ENCODE measurements at regions of chr9 and their contacts with region 1.

Region 1: DNA sequence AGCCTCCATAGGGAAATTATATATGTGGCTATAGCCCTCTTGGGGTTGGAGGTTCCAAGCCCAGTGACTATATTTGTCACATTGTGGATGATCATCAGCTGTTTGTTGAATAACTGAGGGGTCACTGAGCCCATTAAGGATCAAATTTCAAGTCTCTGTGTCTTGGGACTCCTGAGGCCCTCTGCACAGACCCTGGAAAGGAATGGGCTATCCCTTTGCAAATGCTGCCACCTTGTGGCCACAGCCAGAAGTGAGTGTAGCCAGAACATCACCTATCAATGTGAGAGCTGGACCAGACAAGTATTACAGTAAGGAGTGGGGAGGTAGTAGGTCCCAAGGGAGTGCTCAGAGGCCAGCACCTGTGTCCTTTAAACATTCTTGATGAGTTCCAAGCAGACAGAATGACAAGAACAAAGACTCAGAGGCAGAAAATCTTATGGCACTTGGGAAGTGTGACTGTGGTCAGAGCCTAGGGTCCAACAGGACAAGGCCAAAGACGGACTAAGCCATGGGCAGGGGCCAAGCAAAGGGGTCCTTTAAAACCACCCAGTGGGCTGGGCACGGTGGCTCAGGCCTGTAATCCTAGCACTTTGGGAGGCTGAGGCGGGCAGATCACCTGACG is 8.2 kb downstream of the RPP25L start:
- DNase-seq: peak; percentile 83
- CTCF ChIP-seq: peak; percentile 91

Region 2: DNA sequence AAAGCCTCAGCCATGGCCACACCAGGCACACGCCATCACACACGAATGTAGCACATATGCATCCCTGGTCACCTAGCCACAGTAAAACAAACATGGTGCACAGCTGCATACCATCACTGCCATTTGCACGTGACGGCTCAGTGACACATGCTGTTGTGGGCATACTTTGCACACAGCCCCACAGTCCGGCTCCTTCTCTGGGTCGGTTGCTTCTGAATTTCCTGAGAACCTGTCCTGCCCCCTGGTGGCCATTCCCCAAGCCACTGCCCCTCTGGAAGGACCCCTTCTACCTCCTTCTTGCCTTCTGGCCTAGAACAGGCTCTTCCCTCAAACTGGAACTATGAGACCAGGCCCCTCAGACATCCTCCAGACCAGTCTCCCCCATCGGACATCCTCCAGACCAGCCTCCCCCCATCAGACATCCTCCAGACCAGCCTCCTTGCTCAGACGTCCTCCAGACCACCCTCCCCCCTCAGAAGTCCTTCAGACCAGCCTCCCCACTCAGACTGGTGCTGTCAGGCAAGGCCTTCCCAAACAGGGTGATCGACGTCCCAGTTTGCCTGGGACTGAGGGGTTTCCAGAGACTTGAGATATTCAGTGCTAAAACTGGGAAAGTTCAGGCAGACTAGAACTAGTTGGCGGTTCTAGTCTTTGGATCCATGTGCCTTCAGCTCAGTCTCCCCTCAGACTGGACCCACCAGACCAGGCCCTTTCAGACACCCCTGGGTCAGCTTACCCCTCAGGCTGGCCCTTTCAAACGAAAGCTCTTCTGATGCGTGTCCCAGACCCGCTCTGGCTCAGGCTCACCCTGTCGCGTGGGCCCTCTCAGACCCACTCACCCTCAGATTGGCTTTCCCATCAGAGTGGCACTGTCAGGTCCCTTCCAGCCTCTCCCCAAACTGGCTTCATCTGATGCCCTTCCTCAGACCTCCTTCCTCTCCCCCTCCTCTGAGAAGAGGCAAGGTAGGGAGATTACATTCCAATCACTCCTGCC is 56.6 kb before region 1 on chr9:
- CTCF ChIA-PET with region 1: interaction called, 14 read pairs
- POLR2A ChIA-PET with region 1: interaction called, 3 read pairs
- DNase-seq: peak; percentile 58
- CTCF ChIP-seq: peak; percentile 52

Region 3: DNA sequence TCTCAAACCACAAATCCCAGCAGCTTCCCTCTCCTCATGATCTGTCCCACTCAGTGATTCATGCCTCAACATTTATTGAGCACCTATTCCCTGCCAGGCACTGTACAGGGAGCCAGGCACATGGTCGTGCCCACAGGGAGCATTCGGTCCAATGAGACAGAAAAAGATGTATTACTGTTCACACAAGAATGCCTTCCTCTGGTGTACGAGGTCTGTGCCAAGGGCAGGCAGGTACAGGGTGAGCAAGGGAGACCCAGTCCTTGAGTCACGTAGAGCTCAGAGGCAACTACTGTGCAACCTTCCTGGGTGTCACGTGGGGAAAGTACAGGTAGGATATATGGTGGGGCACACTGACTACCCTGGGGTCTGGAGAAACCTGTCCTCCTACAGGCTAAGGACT is 18.8 kb before region 1 on chr9:
- CTCF ChIA-PET with region 1: interaction called, 15 read pairs
- POLR2A ChIA-PET with region 1: no interaction called
- DNase-seq: no peak
- CTCF ChIP-seq: no peak

Region 4: GRCh38 chr9:34620061-34620994 is 16.6 kb after region 1 on chr9 and contains the start of gene DCTN3:
- CTCF ChIA-PET with region 1: interaction called, 19 read pairs
- POLR2A ChIA-PET with region 1: no interaction called
- DNase-seq: peak; percentile 97
- CTCF ChIP-seq: no peak

Region 5: GRCh38 chr9:34646211-34647083 is 42.7 kb after region 1 on chr9 and contains the start of gene GALT:
- CTCF ChIA-PET with region 1: interaction called, 15 read pairs
- POLR2A ChIA-PET with region 1: no interaction called
- DNase-seq: peak; percentile 97
- CTCF ChIP-seq: peak; percentile 57

Region 6: GRCh38 chr9:34658461-34658860 is 54.7 kb after region 1 on chr9:
- CTCF ChIA-PET with region 1: no interaction called
- POLR2A ChIA-PET with region 1: no interaction called
- DNase-seq: no peak
- CTCF ChIP-seq: no peak

Region 7: DNA sequence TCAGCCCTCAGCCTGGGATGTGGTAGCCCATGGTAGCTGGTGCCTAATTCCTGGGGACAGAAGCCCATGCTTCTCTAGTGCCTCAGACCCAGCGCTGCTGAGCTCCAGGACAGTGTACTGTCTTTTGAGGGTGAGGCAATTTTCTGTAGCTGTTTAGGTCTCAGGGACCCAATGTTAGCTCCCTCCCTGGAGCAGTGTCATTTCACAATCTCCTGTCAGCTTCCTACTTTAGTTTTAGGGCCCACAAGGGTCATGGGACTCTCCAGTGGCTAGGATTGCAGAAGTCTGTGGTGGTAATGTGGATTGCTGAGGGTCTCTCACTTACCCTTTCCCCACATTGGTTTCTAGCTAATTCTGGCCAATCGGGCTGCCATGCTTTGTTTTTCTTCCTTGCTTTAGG is 173.9 kb after region 1 on chr9:
- CTCF ChIA-PET with region 1: no interaction called
- POLR2A ChIA-PET with region 1: no interaction called
- DNase-seq: no peak
- CTCF ChIP-seq: no peak

Measured in GM10248 (cell line).